Keratinocyte (primary cell): ENCODE measurements at regions of chr17 and their contacts with region 1.

Region 1: GRCh38 chr17:79393358-79394202 is 217.3 kb downstream of the RBFOX3 start:
- DNase-seq: peak; percentile 25
- H3K4me3 ChIP-seq: no peak overlapping the region
- H3K27ac ChIP-seq: no peak overlapping the region
- H3K4me1 ChIP-seq: no peaks in the 10 kb centered on the region
- H3K27me3 ChIP-seq: peaks cover 65% of the 10 kb centered on the region
- CTCF ChIP-seq: peak; percentile 97 to 100 (median 99)

Region 2: GRCh38 chr17:79045842-79046196 is 347.8 kb before region 1 on chr17:
- dilution Hi-C with region 1: loop called (anchors 25 kb)
- DNase-seq: no peak
- H3K4me3 ChIP-seq: no peak overlapping the region
- H3K27ac ChIP-seq: no peak overlapping the region
- H3K4me1 ChIP-seq: peaks cover 10% of the 10 kb centered on the region
- H3K27me3 ChIP-seq: peaks cover 4% of the 10 kb centered on the region
- CTCF ChIP-seq: peak; percentile 89 to 96 (median 94)

Region 3: GRCh38 chr17:79252886-79253285 is 140.7 kb before region 1 on chr17:
- dilution Hi-C with region 1: no loop called
- DNase-seq: no peak
- H3K4me3 ChIP-seq: no peak overlapping the region
- H3K27ac ChIP-seq: no peak overlapping the region
- H3K4me1 ChIP-seq: no peaks in the 10 kb centered on the region
- H3K27me3 ChIP-seq: peaks cover 43% of the 10 kb centered on the region
- CTCF ChIP-seq: no peak